Left lung (tissue), 14 donors: ENCODE measurements at regions of chr2 and their contacts with region 1.

Region 1: DNA sequence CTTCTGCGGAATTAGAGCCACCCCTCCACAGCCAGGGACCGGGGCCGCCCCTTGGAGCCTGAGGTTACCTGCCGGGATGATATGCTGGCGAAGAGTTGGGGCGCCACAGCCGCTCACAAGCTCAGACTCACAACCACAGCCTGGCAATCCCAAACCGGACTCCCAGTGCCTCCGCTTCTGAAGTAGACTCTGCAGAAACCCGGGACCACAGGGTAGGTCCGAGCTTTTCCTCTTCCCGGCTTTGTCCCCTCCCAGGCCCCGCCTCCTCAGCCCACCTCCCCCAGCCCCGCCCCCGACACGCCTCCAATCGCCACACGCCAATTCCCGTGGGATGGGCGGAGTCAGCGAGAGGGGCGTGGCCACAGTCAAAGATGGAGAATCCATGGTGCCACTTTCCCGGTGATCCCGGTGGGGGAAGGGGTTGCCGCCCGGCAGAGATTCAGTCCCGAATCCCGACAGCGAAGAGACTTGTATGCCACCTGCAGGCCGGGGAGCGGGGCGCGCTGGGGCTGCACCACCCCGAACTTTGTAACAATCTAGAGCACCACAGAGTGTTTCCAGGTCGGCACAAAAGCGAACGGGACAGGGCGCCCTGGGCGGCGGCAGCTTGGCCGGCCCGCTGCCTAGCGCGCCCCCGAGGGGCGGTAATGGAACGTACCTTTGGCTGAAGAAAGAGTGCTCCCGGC is at the start of gene IDH1:
- DNase-seq: peak; percentile 90 to 97 (median 96)
- ATAC-seq: peak; percentile 95
- H3K4me3 ChIP-seq: peak within 1 kb of the TSS; percentile 75 to 95
- H3K27ac ChIP-seq: peak within 1 kb of the TSS; percentile 74 to 85
- H3K4me1 ChIP-seq: peaks cover 0 to 46% of the 10 kb centered on the region in 2 donors
- H3K27me3 ChIP-seq: no peaks in the 10 kb centered on the region
- CTCF ChIP-seq: peak; percentile 29 to 40
- polyA plus RNA-seq, gene IDH1: 79.7 to 100 (median 88.7) TPM

Region 2: GRCh38 chr2:207920321-207920720 is 334.7 kb before region 1 on chr2:
- intact Hi-C with region 1: no loop called
- DNase-seq: peak in 1 of 4 donors; percentile 37
- ATAC-seq: no peak
- H3K4me3 ChIP-seq: no peak overlapping the region
- H3K27ac ChIP-seq: no peak overlapping the region
- H3K4me1 ChIP-seq: no peaks in the 10 kb centered on the region
- H3K27me3 ChIP-seq: no peaks in the 10 kb centered on the region
- CTCF ChIP-seq: no peak

Region 3: GRCh38 chr2:208175069-208175839 is 79.8 kb before region 1 on chr2:
- intact Hi-C with region 1: loop called in 1 of 2 experiments (anchors 5 kb)
- DNase-seq: peak in 3 of 4 donors; percentile 65 to 83 (median 80)
- ATAC-seq: peak; percentile 96
- H3K4me3 ChIP-seq: no peak overlapping the region
- H3K27ac ChIP-seq: no peak overlapping the region
- H3K4me1 ChIP-seq: peaks cover 0 to 30% of the 10 kb centered on the region in 2 donors
- H3K27me3 ChIP-seq: no peaks in the 10 kb centered on the region
- CTCF ChIP-seq: peak; percentile 84 to 91